Dorsolateral prefrontal cortex (tissue), 120 donors: ENCODE measurements at regions of chrX and their contacts with region 1.

Region 1: GRCh38 chrX:150527108-150527507 is 41.3 kb upstream of the MTM1 start:
- DNase-seq: no peak
- H3K4me3 ChIP-seq: no peak overlapping the region
- H3K27ac ChIP-seq: no peak overlapping the region
- H3K27me3 ChIP-seq: peaks cover 0 to 32% (median 3%) of the 10 kb centered on the region in 45 donors
- CTCF ChIP-seq: no peak

Region 2: DNA sequence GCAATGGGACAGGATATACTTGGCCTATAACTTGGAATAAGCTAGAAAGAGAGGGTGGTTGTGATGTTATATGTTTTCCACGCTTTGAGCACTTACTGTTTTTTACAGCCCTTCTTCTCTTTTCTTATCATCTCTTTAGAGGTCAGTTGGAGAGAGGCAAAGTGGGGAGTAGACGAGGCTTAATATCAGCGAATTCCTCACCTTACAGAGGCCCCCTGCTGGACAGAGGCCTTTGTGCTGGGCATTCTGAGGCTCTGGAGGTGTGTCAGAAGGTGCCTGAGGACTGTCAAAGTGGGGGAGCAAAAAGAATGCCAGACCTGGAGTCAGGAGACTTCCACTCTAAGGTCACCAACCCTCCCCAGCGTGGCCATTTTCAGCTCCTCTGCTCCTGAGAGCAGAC is 121.5 kb before region 1 on chrX:
- intact Hi-C with region 1: no loop called
- DNase-seq: no peak
- H3K4me3 ChIP-seq: no peak overlapping the region
- H3K27ac ChIP-seq: no peak overlapping the region
- H3K27me3 ChIP-seq: peaks cover 0 to 31% (median 0%) of the 10 kb centered on the region in 45 donors
- CTCF ChIP-seq: no peak

Region 3: GRCh38 chrX:150465881-150466775 is 61.0 kb before region 1 on chrX:
- intact Hi-C with region 1: loop called in 1 of 2 experiments (anchors 2 kb)
- DNase-seq: peak in 1 of 10 donors; percentile 34
- H3K4me3 ChIP-seq: peak overlapping the region in 1 of 59 donors; percentile 8
- H3K27ac ChIP-seq: peak overlapping the region in 58 of 59 donors; percentile 1 to 95 (median 86)
- H3K27me3 ChIP-seq: peaks cover 0 to 63% (median under 1%) of the 10 kb centered on the region in 45 donors
- CTCF ChIP-seq: no peak

Region 4: DNA sequence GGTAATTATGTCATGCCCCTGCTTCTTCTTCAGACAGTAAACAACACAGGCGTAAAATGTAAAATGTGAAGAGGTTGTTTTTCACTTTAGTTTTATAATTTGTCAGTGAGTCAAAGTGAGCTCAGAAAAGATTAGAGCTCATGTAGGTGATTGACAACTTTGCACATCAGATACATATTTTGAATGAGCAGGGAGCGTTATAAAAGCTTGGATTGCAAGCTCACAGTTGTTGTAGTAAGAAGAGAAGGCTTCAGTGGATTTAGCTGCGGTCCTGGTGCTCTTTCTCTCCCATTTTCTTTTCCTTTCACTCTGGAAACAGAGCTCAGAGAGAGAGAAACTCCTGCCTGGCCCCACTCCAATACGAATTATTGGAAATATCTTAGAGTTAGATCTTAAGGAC is 192.5 kb after region 1 on chrX:
- intact Hi-C with region 1: no loop called
- DNase-seq: no peak
- H3K4me3 ChIP-seq: no peak overlapping the region
- H3K27ac ChIP-seq: no peak overlapping the region
- H3K27me3 ChIP-seq: peaks cover 0 to 20% (median under 1%) of the 10 kb centered on the region in 45 donors
- CTCF ChIP-seq: no peak